ENCODE measurements at regions of chr12 and their contacts with region 1.

Region 1: DNA sequence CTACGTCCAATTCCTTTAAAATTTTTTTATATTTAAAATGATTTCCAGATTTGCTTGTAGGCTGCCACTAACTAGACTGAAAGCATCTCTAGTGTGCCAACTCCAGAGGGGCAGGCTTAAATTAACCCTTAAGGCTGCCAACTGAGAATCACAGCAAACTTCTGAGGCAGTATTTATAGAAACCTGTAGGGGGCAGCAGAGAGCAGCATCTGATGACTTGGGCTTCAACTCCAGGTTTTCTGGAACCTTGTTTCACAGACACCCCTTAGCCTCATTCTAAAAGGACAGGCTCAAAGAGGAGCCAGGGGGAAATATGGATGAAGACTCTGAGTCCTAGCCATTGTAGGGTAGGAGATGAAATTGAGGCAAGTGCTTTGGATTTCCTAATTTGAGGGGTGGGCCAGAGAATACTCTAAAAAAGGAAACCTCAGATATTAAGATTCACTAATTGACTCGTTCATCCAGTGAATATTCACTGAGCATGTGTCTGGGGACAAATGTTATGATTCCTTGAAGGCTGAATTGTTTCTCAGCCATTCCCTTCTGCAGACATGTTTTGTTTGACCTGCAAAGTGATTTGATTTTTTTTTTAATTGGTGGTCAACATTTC is 63.3 kb upstream of the HSPB8 start:
- DNase-seq: peak in 4 of 5 donors; percentile 24 to 71 (median 45)
- H3K4me3 ChIP-seq: no peak overlapping the region
- H3K27ac ChIP-seq: no peak overlapping the region
- H3K4me1 ChIP-seq: no peaks in the 10 kb centered on the region
- H3K27me3 ChIP-seq: no peaks in the 10 kb centered on the region
- CTCF ChIP-seq: peak; percentile 93

Region 2: GRCh38 chr12:119020406-119021360 is 94.7 kb before region 1 on chr12:
- intact Hi-C with region 1: no loop called
- DNase-seq: peak in 1 of 5 donors; percentile 15
- H3K4me3 ChIP-seq: no peak overlapping the region
- H3K27ac ChIP-seq: no peak overlapping the region
- H3K4me1 ChIP-seq: no peaks in the 10 kb centered on the region
- H3K27me3 ChIP-seq: no peaks in the 10 kb centered on the region
- CTCF ChIP-seq: peak; percentile 11

Region 3: GRCh38 chr12:119415714-119416113 is 300.3 kb after region 1 on chr12:
- intact Hi-C with region 1: loop called (anchors 5 kb)
- DNase-seq: no peak
- H3K4me3 ChIP-seq: no peak overlapping the region
- H3K27ac ChIP-seq: no peak overlapping the region
- H3K4me1 ChIP-seq: no peaks in the 10 kb centered on the region
- H3K27me3 ChIP-seq: no peaks in the 10 kb centered on the region
- CTCF ChIP-seq: no peak

Region 4: GRCh38 chr12:119544765-119545625 is 429.6 kb after region 1 on chr12:
- intact Hi-C with region 1: loop called (anchors 10 kb)
- DNase-seq: peak in 4 of 5 donors; percentile 51 to 76 (median 61)
- H3K4me3 ChIP-seq: no peak overlapping the region
- H3K27ac ChIP-seq: no peak overlapping the region
- H3K4me1 ChIP-seq: no peaks in the 10 kb centered on the region
- H3K27me3 ChIP-seq: no peaks in the 10 kb centered on the region
- CTCF ChIP-seq: peak; percentile 89